BJ (cell line): ENCODE measurements at regions of chr4 and their contacts with region 1.

Region 1: DNA sequence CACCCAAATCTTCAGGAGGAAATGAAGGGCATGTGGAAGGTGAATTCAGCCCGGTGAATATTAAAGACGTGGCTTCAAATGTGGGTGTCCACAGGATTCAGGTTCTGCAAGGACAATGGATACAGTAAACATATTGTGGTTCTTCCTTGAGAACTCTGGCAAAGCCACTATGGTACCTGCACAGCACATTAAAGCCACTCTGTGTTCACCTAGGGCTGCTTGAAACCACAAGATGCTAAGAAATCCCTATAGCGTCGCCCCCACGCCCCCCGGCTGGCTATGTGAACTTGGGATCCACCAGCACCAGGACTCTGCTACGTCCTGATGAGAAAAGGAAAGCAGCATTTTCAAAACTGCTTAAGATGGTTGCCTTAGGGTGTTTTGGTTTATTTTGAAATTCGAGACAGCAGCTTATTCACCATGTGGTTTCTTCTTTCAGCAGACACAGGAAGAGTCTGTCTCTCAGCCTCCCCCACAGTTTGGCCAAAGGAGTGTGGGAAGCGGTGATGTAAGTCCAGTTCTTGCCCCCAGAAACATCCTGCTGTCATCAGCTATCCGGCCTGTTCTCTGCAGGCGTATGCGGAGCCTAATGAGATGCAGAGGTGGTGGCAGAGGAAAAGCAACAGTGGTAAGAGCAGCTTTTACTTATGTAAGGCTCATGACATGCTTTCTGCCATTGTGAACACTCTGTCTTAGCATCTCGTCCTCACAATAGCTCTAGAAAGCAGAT is 111.5 kb downstream of the AFAP1 start:
- DNase-seq: peak; percentile 100
- H3K4me3 ChIP-seq: no peak overlapping the region
- H3K27me3 ChIP-seq: no peaks in the 10 kb centered on the region
- CTCF ChIP-seq: no peak

Region 2: GRCh38 chr4:6673660-6674499 is 1154.3 kb before region 1 on chr4:
- CTCF ChIA-PET with region 1: no interaction called
- POLR2A ChIA-PET with region 1: interaction called, 11 read pairs
- DNase-seq: peak; percentile 77
- H3K4me3 ChIP-seq: peak overlapping the region; percentile 63
- H3K27me3 ChIP-seq: no peaks in the 10 kb centered on the region
- CTCF ChIP-seq: 0 out of 2 replicates have a peak, but pooled peaks have one; percentile 4

Region 3: GRCh38 chr4:7649741-7650531 is 178.2 kb before region 1 on chr4:
- CTCF ChIA-PET with region 1: no interaction called
- POLR2A ChIA-PET with region 1: no interaction called
- DNase-seq: peak; percentile 94
- H3K4me3 ChIP-seq: no peak overlapping the region
- H3K27me3 ChIP-seq: no peaks in the 10 kb centered on the region
- CTCF ChIP-seq: no peak

Region 4: DNA sequence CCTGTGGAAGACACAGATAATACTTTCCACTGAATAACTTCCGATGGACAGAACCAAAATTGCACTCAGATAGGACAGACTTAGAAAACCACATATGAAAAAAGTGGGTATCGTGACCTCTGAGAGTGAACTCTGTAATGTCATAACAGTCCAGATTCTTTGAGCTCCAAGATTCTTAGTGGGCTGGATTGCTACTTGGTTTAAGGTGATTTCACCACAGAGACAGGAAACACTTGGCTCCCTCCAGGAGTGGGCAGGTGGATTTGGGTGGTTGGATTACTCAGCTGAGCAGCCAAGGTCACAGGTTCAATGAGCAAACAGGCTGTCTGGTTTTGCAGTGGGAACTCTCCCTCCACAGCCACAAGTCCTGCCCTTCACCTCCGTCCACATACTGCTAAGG is 14.5 kb before region 1 on chr4:
- CTCF ChIA-PET with region 1: interaction called, 3 read pairs
- POLR2A ChIA-PET with region 1: interaction called, 11 read pairs
- DNase-seq: no peak
- H3K4me3 ChIP-seq: no peak overlapping the region
- H3K27me3 ChIP-seq: no peaks in the 10 kb centered on the region
- CTCF ChIP-seq: no peak